Esophagus squamous epithelium (tissue), 5 donors: ENCODE measurements at regions of chr18 and their contacts with region 1.

Region 1: DNA sequence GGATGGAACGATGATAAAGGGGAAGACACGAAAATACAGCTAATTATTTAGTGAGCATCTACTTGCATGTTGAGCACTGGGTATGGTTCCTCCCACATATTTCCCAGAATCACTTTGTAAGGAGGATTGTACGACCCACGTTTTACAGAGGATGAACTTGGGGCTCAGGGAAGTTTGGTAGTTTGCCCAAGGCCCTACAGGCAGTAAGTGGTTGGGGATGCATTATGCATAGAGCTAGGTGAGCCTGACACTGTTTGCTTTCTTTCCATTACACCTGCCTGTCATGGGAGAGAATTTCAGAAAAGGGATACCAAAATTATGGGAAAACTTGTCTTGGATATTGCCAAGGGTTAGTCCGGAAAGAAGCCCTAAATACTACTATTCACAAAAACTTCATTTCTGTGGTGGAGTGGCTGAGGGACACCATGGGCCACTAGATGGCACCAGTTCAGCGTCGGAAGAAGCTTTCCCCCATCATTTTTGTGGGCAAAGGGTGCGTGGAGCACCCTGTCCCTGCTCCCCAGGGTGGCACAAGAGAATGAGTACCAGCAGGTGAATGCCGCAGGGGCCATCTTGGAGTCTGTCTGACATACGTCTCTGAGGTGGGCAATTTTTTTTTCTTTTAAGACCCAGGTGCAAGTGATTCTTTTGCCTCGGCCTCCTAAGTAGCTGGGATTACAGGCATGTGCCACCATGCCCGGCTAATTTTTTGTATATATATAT is 23.5 kb upstream of the C18orf32 start:
- DNase-seq: no peak
- H3K4me3 ChIP-seq: no peak overlapping the region
- H3K27ac ChIP-seq: no peak overlapping the region
- H3K4me1 ChIP-seq: no peaks in the 10 kb centered on the region
- H3K27me3 ChIP-seq: peaks cover 0 to 4% (median 0%) of the 10 kb centered on the region in 4 donors
- CTCF ChIP-seq: peak; percentile 60 to 78 (median 74)
- POLR2A ChIP-seq: no peak

Region 2: DNA sequence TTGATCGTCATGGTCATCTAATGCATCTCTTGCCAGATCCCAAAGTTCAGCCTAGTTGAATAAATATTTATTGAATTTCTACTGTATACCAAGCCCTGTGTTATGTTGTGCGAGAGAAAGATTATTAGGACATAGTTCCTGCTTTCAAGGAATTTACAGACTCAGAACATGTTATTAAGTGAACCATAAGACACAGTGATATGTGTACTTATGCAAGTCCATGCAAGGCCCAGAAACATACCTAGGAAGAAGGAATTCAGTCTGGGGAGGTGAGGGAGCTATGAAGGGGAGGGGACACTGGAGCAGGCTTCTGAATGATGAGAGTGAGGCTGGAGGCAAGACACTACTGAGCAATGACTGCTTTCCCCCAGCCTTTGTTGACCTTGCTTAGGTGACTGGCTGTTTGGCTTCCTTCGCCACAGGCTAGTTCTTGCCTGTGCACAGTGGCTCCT is 221.3 kb after region 1 on chr18:
- intact Hi-C with region 1: no loop called
- DNase-seq: no peak
- H3K4me3 ChIP-seq: no peak overlapping the region
- H3K27ac ChIP-seq: no peak overlapping the region
- H3K4me1 ChIP-seq: peaks cover 0 to 21% (median 0%) of the 10 kb centered on the region in 3 donors
- H3K27me3 ChIP-seq: peaks cover 0 to 8% (median 0%) of the 10 kb centered on the region in 4 donors
- CTCF ChIP-seq: no peak
- POLR2A ChIP-seq: no peak

Region 3: GRCh38 chr18:49858309-49859020 is 347.9 kb after region 1 on chr18:
- intact Hi-C with region 1: loop called (anchors 10 kb)
- DNase-seq: no peak
- H3K4me3 ChIP-seq: no peak overlapping the region
- H3K27ac ChIP-seq: peak overlapping the region; percentile 3 to 78 (median 40)
- H3K4me1 ChIP-seq: peaks cover 0 to 21% (median 8%) of the 10 kb centered on the region in 3 donors
- H3K27me3 ChIP-seq: no peaks in the 10 kb centered on the region
- CTCF ChIP-seq: peak; percentile 76 to 94 (median 88)
- POLR2A ChIP-seq: no peak